GM18951 (cell line): ENCODE measurements at regions of chrX and their contacts with region 1.

Region 1: DNA sequence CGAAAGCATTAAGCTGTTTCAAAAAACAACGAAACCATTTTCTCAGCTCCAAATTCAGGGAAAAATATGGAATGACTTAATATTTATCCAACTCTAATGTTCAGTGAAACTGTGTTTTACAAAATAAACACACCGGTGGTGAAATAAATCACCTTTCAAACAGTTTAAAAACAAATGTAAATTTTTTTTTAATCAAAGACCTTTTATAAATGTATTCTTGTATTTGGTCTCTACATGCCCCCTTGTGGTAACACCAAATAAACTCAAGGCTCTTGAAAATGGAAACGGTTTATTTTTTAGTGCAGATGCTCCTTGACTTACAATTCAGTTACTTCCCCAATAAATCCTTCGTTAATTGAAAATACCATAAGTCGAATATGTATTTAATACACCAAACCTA is 45.8 kb upstream of the ITM2A start:
- POLR2A ChIP-seq: no peak

Region 2: GRCh38 chrX:79081895-79082512 is 331.0 kb before region 1 on chrX:
- in situ Hi-C with region 1: loop called (anchors 25 kb)
- POLR2A ChIP-seq: no peak